ENCODE measurements at regions of chr1 and their contacts with region 1.

Region 1: GRCh38 chr1:167687919-167688519 is 33.8 kb upstream of the MPZL1 start:
- DNase-seq: peak; percentile 87
- ATAC-seq: peak; percentile 76
- H3K4me3 Mint-ChIP-seq: no peak overlapping the region
- H3K27ac Mint-ChIP-seq: no peak overlapping the region
- H3K4me1 Mint-ChIP-seq: peaks cover 25% of the 10 kb centered on the region
- H3K27me3 Mint-ChIP-seq: no peaks in the 10 kb centered on the region

Region 2: GRCh38 chr1:167563579-167564246 is 124.3 kb before region 1 on chr1:
- CTCF ChIA-PET with region 1: interaction called, 33 read pairs
- POLR2A ChIA-PET with region 1: no interaction called
- intact Hi-C with region 1: no loop called
- DNase-seq: no peak
- ATAC-seq: no peak
- H3K4me3 Mint-ChIP-seq: no peak overlapping the region
- H3K27ac Mint-ChIP-seq: no peak overlapping the region
- H3K4me1 Mint-ChIP-seq: no peaks in the 10 kb centered on the region
- H3K27me3 Mint-ChIP-seq: no peaks in the 10 kb centered on the region

Region 3: DNA sequence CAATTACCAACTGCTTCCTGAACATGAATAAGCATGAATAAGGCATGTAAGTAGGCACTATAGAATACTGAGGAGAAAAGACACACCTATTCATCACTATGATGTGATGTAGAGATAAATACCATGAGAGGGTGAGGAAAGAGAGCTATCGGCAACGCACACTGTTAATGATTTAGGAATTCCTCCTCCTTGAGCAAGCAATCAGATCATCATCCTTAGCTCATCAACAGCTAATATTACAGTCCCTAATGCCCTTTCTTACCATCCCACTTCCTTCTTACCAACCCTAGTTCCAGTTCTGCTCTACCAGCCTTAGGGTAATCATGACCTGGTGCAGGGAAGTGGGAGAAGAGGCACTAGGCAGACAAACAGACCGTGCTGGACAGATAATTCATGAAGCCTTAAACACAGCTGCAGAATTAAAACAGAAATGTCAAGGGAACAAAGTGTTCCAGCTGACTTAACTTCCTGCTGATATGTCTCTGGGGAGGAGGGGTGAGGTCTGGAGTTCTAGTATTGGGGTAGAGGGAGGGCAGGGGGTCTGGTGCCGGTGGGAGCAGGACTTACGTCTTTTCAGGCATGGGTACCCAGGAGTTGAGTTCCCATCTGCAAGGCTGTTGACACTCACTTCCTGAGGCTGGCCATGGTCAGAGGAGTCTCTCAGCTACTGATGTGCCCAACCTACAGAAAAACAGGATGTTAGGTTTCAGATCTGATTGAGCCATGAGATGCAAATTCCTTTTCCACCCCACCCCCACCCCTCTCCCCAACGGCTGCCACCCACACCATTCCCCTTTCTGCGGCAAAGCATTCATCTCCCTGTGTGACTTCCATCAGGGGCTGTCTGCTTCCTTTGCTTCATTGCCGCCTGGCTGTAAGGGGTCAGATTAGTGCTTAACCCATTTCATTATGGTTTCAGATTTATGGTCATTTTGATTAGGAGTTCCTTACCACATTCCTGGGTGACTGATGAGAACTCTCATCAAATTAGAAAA is 70.6 kb before region 1 on chr1:
- CTCF ChIA-PET with region 1: interaction called, 11 read pairs
- POLR2A ChIA-PET with region 1: interaction called, 5 read pairs
- intact Hi-C with region 1: no loop called
- DNase-seq: no peak
- ATAC-seq: peak; percentile 75
- H3K4me3 Mint-ChIP-seq: peak overlapping the region; percentile 66
- H3K27ac Mint-ChIP-seq: peak overlapping the region; percentile 92
- H3K4me1 Mint-ChIP-seq: peaks cover 54% of the 10 kb centered on the region
- H3K27me3 Mint-ChIP-seq: no peaks in the 10 kb centered on the region

Region 4: GRCh38 chr1:167669209-167670124 is 18.6 kb before region 1 on chr1:
- CTCF ChIA-PET with region 1: interaction called, 12 read pairs
- POLR2A ChIA-PET with region 1: no interaction called
- intact Hi-C with region 1: no loop called
- DNase-seq: no peak
- ATAC-seq: no peak
- H3K4me3 Mint-ChIP-seq: no peak overlapping the region
- H3K27ac Mint-ChIP-seq: no peak overlapping the region
- H3K4me1 Mint-ChIP-seq: peaks cover 77% of the 10 kb centered on the region
- H3K27me3 Mint-ChIP-seq: no peaks in the 10 kb centered on the region

Region 5: GRCh38 chr1:168032029-168032428 is 344.0 kb after region 1 on chr1:
- CTCF ChIA-PET with region 1: no interaction called
- POLR2A ChIA-PET with region 1: no interaction called
- intact Hi-C with region 1: no loop called
- DNase-seq: no peak
- ATAC-seq: no peak
- H3K4me3 Mint-ChIP-seq: no peak overlapping the region
- H3K27ac Mint-ChIP-seq: no peak overlapping the region
- H3K4me1 Mint-ChIP-seq: no peaks in the 10 kb centered on the region
- H3K27me3 Mint-ChIP-seq: no peaks in the 10 kb centered on the region